ENCODE measurements at regions of chr11 and their contacts with region 1.

Region 1: GRCh38 chr11:72189461-72190275 is 2.3 kb upstream of the FOLR1 start:
- DNase-seq: no peak
- H3K27ac ChIP-seq: no peak overlapping the region
- CTCF ChIP-seq: no peak

Region 2: DNA sequence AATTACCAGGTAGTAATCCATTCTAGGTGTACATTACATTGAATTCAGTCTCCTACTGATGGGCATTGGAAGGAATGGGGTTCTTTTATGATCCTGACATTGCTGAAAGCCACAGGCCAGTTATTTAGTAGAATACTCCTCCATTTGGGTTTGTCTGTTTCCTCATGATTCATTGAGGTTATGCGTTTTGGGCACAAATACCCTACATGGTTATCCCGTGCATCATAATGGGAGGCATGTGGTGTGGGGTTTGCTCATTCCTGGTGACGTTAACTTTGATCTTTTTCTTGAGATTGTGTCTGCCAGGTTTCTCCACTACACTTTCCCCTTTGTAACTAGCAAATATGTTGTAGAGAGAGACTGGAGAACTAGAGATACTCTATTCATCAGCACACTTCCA is 48.6 kb before region 1 on chr11:
- CTCF ChIA-PET with region 1: interaction called, 14 read pairs
- POLR2A ChIA-PET with region 1: no interaction called
- DNase-seq: peak; percentile 84
- H3K27ac ChIP-seq: peak overlapping the region; percentile 86; the same call in 1 of the 2 replicates
- CTCF ChIP-seq: no peak